MCF 10A (cell line): ENCODE measurements at regions of chr1 and their contacts with region 1.

Region 1: GRCh38 chr1:153639280-153639679 is 5.4 kb downstream of the CHTOP start:
- DNase-seq: no peak
- H3K4me3 Mint-ChIP-seq: no peak overlapping the region
- H3K27ac Mint-ChIP-seq: no peak overlapping the region
- H3K4me1 Mint-ChIP-seq: peaks cover 27% of the 10 kb centered on the region
- H3K27me3 Mint-ChIP-seq: no peaks in the 10 kb centered on the region
- CTCF ChIP-seq: no peak

Region 2: GRCh38 chr1:153649863-153650235 is 10.6 kb after region 1 on chr1:
- CTCF ChIA-PET with region 1: interaction called, 4 read pairs
- POLR2A ChIA-PET with region 1: interaction called, 91 read pairs
- intact Hi-C with region 1: no loop called
- DNase-seq: peak; percentile 54
- H3K4me3 Mint-ChIP-seq: no peak overlapping the region
- H3K27ac Mint-ChIP-seq: peak overlapping the region; percentile 10
- H3K4me1 Mint-ChIP-seq: peaks cover 13% of the 10 kb centered on the region
- H3K27me3 Mint-ChIP-seq: no peaks in the 10 kb centered on the region
- CTCF ChIP-seq: no peak

Region 3: GRCh38 chr1:153658400-153659174 is 19.3 kb after region 1 on chr1 and contains the start of gene SNAPIN:
- CTCF ChIA-PET with region 1: interaction called, 9 read pairs
- POLR2A ChIA-PET with region 1: interaction called, 66 read pairs
- intact Hi-C with region 1: no loop called
- DNase-seq: peak; percentile 95
- H3K4me3 Mint-ChIP-seq: peak within 1 kb of the TSS; percentile 92
- H3K27ac Mint-ChIP-seq: peak within 1 kb of the TSS; percentile 91
- H3K4me1 Mint-ChIP-seq: peaks cover 5% of the 10 kb centered on the region
- H3K27me3 Mint-ChIP-seq: no peaks in the 10 kb centered on the region
- CTCF ChIP-seq: no peak
- total RNA-seq, gene SNAPIN: 55.9 and 63.7 TPM in 2 replicates